ENCODE measurements at regions of chr11 and their contacts with region 1.

Region 1: DNA sequence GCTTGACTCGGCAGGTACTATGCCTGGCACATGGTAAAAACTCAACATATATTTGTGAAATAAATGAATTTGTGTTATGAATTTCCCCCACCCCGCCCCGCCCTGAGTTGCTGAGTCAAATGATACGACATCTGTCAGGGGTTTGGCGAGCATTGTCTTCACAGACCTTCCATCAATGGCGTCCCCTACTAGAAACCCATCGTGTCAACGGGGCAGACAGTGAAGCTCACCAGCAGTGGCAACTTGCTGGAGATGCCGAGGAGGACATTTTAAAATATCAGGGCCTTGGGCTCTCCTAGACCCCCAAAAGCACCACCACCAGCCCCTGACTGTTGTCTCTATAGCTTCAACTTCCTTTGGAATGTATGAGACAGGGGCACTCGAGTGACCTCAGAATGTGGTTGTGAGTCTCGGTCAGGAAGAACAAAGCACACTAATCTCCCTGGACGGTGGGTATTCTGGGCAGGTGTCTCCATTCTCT is 761 bp upstream of the NXF1 start:
- DNase-seq: no peak
- H3K4me3 ChIP-seq: peak overlapping the region; percentile 66 to 99 (median 90)
- H3K27ac ChIP-seq: peak overlapping the region in 58 of 59 donors; percentile 26 to 97 (median 87)
- H3K27me3 ChIP-seq: no peaks in the 10 kb centered on the region
- CTCF ChIP-seq: no peak

Region 2: DNA sequence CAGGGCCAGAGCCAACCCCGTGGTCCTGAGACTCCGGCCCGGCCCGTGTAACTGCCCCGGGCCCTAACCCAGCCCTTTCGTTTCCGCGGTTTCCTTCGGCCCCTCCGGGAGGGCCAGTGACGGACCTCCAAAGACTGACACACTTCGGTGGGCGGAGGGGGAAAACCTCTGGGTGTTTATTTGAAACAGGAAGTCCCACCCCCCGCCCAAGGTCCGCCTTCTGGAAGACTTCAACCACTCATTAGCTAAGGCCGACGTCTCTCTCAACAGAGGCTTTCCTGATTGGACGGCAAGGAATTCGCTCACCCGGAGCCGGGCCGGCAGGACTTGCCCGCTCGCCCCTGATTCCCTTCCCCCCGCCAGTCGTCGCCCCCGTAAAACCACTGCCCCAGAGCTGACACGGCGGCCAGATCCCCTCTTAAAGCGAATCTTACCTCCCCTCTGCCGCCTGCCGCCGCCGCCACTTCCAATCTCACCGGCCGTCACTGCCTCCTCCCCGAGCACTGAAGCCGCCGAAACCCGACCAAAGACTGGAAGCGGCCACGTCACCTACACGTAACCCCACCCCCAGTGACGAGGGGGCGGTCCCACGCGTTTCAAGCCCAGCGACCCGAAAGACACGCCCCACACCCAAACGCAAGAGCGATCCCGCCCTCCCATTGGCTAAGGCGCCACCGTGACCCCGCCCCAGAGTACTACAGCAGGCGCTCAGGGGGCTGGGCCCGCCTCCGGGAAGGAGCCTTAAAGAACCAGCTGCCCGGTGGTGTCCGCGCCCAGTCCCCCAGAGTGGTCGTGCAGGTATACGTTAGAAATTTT is 25.7 kb after region 1 on chr11 and contains the start of gene STX5:
- intact Hi-C with region 1: loop called in 1 of 2 experiments (anchors 1 kb)
- DNase-seq: peak; percentile 100
- H3K4me3 ChIP-seq: peak within 1 kb of the TSS; percentile 71 to 100 (median 95)
- H3K27ac ChIP-seq: peak within 1 kb of the TSS in 58 of 59 donors; percentile 49 to 96 (median 86)
- H3K27me3 ChIP-seq: no peaks in the 10 kb centered on the region
- CTCF ChIP-seq: peak in 3 of 56 donors; percentile 6 to 8 (median 8)
- total RNA-seq, gene STX5: 32.4 to 53.5 (median 41.9) TPM

Region 3: DNA sequence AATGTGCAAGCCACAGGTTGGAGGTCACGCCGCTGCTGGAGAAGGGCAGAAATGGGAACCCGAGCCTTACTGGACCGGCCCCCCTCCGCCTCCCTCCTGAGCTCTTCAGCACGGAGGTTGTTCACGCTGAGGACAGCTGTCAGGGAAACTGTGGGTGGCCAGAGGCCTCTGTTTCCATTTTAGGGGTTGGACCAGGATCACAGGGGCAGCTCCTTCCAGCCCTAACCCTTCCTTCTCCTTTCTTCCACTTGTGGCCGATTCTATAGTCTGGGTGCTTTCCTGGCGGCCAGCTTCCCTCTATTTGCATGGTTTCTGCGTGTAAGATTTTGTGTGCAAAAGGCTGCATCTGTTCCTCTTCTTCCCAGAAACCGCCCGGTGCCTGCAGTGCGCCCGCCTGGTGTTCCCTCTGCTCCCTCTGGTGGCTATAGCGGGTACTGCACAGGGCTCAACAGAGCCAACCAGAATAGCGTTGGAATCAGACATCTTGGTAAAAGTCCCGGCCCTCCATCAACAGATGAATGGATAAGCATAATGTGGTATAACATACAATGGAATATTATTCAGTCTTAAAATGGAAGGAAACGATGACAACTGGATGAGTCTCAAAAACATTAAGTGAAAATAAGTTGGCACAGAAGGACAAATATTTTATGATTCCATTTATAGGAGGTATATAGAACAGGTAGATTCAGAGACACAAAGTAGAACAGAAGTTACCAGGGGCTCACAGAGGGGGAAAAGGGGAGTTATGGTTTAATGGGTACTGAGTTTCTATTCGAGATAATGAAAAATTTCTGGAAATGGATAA is 218.0 kb after region 1 on chr11:
- intact Hi-C with region 1: no loop called
- DNase-seq: peak; percentile 83 to 96 (median 92)
- H3K4me3 ChIP-seq: peak overlapping the region in 16 of 59 donors; percentile 4 to 35 (median 16)
- H3K27ac ChIP-seq: peak overlapping the region in 57 of 59 donors; percentile 3 to 92 (median 75)
- H3K27me3 ChIP-seq: no peaks in the 10 kb centered on the region
- CTCF ChIP-seq: peak in 55 of 56 donors; percentile 99 to 100 (median 100)